ENCODE measurements at regions of chr2 and their contacts with region 1.

Region 1: DNA sequence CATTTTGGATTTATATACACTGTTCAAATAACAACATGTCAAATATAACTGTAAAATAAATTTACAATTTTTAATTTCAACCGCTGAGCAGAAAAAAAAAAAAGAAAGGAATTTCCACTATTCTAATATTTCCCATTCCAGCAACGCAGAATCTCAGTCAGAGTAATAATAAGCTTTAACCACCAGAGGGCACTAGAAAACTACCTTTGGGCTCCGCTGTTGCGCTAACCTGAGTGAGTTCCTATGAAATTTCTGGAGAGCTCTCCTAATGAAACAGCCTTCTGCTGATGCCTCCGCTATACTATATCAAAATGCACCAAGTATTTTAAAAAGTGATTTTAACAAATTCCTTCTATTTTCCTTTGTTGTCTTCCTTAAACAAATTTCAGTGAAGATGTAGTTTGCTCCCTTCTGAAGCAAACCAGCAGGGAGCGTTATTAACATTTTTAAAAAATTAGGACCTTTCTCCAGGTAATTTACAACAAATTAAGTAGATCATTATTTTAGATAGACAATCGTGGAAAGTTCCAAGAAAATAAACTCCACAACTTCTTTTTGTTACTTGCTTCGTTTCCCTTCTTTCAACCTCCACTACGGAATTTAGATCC is 23.0 kb downstream of the ERMN start:
- DNase-seq: peak; percentile 50
- ATAC-seq: peak; percentile 75
- H3K4me3 Mint-ChIP-seq: no peak overlapping the region
- H3K27ac Mint-ChIP-seq: no peak overlapping the region
- H3K4me1 Mint-ChIP-seq: peaks cover 30% of the 10 kb centered on the region
- H3K27me3 Mint-ChIP-seq: peaks cover 3% of the 10 kb centered on the region

Region 2: DNA sequence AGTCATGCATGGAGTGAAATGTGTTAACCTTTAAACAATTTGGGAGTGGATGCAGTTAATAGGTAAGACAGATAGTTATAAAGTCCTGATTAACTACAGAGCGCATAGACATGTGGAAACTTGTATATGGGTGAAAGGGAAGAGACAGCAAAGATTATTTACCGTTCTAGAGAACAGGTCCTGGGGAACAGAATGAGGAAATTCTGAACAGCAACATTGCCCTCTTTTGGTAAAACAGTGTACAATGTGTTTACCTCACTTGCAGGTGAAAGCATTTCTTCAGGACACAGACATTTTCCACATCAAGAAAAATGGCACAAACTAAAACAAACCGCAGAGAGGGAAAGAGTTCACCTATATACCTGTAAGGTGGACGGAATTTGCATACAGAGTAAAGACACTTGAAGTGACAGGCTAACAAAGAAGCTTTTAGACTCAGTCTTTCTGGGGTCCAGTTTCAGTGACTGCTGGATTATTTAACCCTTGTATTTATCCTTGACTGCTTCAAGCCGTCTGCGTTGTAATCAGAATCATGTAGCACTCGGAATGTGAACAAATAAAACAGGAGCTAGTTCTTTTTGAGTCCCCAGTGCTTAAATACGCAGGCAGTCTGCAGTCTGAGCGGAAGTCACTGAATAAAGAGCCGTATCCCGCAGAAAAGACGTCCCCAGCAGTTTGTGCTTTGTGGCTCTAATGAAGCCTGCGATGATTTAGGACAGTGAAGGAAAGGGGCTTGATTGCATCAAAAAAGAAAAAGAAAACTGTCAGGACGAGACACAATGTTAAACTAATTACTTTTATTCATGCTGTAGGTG is 409.9 kb before region 1 on chr2:
- CTCF ChIA-PET with region 1: no interaction called
- POLR2A ChIA-PET with region 1: no interaction called
- intact Hi-C with region 1: no loop called
- DNase-seq: no peak
- ATAC-seq: peak; percentile 58
- H3K4me3 Mint-ChIP-seq: no peak overlapping the region
- H3K27ac Mint-ChIP-seq: no peak overlapping the region
- H3K4me1 Mint-ChIP-seq: peaks cover 10% of the 10 kb centered on the region
- H3K27me3 Mint-ChIP-seq: peaks cover 30% of the 10 kb centered on the region

Region 3: GRCh38 chr2:156908825-156909224 is 393.8 kb before region 1 on chr2:
- CTCF ChIA-PET with region 1: no interaction called
- POLR2A ChIA-PET with region 1: no interaction called
- intact Hi-C with region 1: no loop called
- DNase-seq: no peak
- ATAC-seq: peak; percentile 30
- H3K4me3 Mint-ChIP-seq: no peak overlapping the region
- H3K27ac Mint-ChIP-seq: no peak overlapping the region
- H3K4me1 Mint-ChIP-seq: peaks cover 3% of the 10 kb centered on the region
- H3K27me3 Mint-ChIP-seq: no peaks in the 10 kb centered on the region

Region 4: DNA sequence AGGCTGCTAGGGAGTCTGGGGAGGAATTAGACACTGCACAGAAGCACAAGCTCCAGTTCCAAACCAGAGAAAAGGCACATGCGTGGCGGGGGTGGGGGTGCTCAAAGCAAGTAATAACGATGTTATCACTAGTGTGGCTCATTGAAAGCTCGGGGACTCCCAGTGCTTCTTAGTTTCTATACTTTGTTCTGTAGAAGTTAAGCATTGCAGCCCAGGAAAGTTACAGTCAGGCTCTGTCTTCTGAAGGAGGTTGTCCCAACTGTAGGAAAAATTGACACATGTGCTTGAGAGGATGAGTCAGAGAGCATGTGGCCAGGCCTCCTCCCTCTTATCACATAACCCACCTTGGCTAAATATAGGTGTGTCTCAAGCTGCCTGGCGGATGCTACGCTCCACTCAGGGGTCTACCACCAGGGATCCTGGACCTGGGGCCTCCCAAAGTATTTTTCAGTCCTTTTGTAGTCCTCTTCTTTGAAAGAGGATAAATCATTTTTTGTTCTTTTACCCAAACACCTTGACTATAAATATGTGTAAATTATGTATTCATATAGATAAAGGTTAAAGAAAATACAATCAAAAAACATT is 41.3 kb before region 1 on chr2:
- CTCF ChIA-PET with region 1: interaction called, 15 read pairs
- POLR2A ChIA-PET with region 1: no interaction called
- intact Hi-C with region 1: loop called in 1 of 2 experiments (anchors 2 kb)
- DNase-seq: peak; percentile 84
- ATAC-seq: peak; percentile 79
- H3K4me3 Mint-ChIP-seq: peak overlapping the region; percentile 4
- H3K27ac Mint-ChIP-seq: peak overlapping the region; percentile 26
- H3K4me1 Mint-ChIP-seq: peaks cover 38% of the 10 kb centered on the region
- H3K27me3 Mint-ChIP-seq: peaks cover 12% of the 10 kb centered on the region

Region 5: GRCh38 chr2:157320409-157320808 is 17.8 kb after region 1 on chr2:
- CTCF ChIA-PET with region 1: interaction called, 189 read pairs
- POLR2A ChIA-PET with region 1: no interaction called
- intact Hi-C with region 1: no loop called
- DNase-seq: no peak
- ATAC-seq: no peak
- H3K4me3 Mint-ChIP-seq: no peak overlapping the region
- H3K27ac Mint-ChIP-seq: no peak overlapping the region
- H3K4me1 Mint-ChIP-seq: peaks cover 21% of the 10 kb centered on the region
- H3K27me3 Mint-ChIP-seq: no peaks in the 10 kb centered on the region

Region 6: DNA sequence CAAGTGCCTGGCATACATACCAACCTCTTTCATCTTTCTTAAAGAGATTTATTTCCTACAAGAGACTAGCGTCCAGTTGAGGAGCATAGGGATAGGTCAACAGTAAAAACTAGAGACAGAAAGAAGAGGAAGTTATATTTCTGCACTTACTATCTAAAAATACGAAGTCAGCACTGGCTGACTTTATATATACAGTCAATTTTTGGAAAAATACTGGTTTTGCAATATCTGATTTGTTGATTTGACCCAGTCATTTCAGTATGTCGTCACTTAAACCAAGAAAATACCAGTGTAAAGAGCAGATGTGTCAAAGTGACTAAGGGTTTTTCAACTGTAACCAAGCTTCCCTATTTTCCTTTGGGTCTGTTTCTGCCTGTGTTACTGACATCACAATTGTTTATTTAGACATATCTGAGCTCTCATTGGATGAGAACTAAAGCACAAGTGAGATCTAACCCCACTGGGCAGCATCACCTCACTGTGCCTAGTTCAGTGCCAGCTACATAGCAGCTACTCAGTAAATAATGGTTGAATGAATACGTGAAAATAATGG is 118.3 kb after region 1 on chr2:
- CTCF ChIA-PET with region 1: interaction called, 14 read pairs
- POLR2A ChIA-PET with region 1: interaction called, 3 read pairs
- intact Hi-C with region 1: no loop called
- DNase-seq: peak; percentile 60
- ATAC-seq: peak; percentile 57
- H3K4me3 Mint-ChIP-seq: peak overlapping the region; percentile 52
- H3K27ac Mint-ChIP-seq: peak overlapping the region; percentile 93
- H3K4me1 Mint-ChIP-seq: peaks cover 78% of the 10 kb centered on the region
- H3K27me3 Mint-ChIP-seq: no peaks in the 10 kb centered on the region

Region 7: DNA sequence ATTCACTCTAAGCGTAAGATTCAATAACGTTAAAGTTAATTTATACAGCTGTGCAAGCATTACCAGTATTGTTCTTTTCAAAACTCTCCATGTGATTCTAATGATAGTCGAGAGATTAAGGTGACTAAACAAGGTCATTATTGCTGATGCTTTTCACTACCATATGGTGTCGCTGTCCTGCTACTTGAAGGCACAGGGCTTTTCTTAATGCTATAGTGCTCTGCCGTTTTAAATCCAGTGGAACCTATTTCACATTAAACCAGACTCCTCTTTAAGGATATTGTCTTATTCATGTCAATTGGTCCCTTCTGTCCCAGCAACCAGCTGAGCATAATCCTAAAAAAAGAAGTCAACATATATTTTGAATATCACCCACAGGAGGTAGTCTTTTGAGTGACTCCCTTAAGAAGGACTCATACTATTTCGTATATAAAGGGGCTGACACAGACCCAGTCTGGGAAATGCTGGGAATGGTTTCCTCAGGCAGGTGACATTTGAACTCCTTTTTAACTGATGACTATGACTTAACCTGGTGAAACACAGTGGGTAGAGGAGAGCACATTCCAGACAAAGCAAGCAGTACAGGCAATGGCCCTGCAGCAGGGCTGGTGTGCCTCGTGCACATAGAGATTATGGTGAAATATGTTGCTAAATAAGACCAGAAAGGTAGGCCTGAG is 195.2 kb after region 1 on chr2:
- CTCF ChIA-PET with region 1: interaction called, 44 read pairs
- POLR2A ChIA-PET with region 1: no interaction called
- intact Hi-C with region 1: loop called (anchors 2 to 10 kb)
- DNase-seq: peak; percentile 23
- ATAC-seq: peak; percentile 94
- H3K4me3 Mint-ChIP-seq: no peak overlapping the region
- H3K27ac Mint-ChIP-seq: no peak overlapping the region
- H3K4me1 Mint-ChIP-seq: peaks cover 43% of the 10 kb centered on the region
- H3K27me3 Mint-ChIP-seq: no peaks in the 10 kb centered on the region

Region 8: DNA sequence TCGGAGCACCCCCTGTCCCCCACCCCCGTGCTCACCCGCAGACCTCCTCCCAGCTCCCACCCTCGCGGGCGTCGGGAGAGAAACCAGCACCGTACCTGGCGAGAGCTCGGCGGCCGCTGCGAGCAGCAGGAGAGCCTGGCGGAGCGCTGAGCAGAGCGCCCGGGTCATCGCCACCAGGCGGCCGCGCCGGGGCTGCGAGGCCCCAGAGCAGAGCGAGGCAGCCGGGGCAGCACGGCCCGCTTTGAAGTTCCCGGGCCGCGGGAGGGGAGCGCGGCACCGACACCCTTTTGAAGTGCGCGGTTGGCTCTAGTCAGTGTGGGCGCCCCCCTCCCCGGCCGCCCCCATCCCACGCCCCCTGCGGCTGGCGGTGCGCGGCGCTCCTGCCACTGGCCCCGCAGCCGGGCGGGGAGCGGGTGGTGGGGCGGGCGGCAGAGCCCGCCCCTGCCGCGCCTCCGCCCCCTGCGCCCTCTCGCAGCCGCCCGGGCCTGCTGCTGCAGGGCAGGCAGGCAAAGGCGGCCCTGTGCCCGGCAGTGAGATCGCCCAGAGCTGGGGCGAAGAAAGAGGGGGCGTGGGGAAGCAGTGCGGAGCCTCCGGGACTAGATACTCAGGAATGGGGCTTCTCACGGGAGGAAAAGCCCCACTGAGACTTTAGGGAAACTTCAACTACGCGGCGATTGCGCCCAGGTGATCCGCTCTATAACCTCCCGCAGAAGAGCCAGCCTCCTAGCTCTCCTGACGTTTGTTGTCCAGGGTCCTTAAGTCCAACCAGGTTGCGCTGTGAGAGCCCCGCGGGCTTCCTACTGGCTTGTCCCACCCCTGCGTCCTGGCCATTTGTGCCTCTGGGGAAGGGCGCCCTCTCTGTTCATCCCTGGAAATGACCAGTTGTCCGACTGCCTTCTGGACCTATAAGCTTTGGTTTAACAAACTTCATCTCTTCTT is 326.1 kb after region 1 on chr2 and contains the start of gene ACVR1C:
- CTCF ChIA-PET with region 1: interaction called, 17 read pairs
- POLR2A ChIA-PET with region 1: no interaction called
- intact Hi-C with region 1: loop called (anchors 1 to 10 kb)
- DNase-seq: peak; percentile 80
- ATAC-seq: peak; percentile 82
- H3K4me3 Mint-ChIP-seq: peak within 1 kb of the TSS; percentile 76
- H3K27ac Mint-ChIP-seq: peak within 1 kb of the TSS; percentile 23
- H3K4me1 Mint-ChIP-seq: peaks cover 34% of the 10 kb centered on the region
- H3K27me3 Mint-ChIP-seq: peaks cover 5% of the 10 kb centered on the region
- total RNA-seq, gene ACVR1C: 1.6 to 1.7 TPM

Region 9: DNA sequence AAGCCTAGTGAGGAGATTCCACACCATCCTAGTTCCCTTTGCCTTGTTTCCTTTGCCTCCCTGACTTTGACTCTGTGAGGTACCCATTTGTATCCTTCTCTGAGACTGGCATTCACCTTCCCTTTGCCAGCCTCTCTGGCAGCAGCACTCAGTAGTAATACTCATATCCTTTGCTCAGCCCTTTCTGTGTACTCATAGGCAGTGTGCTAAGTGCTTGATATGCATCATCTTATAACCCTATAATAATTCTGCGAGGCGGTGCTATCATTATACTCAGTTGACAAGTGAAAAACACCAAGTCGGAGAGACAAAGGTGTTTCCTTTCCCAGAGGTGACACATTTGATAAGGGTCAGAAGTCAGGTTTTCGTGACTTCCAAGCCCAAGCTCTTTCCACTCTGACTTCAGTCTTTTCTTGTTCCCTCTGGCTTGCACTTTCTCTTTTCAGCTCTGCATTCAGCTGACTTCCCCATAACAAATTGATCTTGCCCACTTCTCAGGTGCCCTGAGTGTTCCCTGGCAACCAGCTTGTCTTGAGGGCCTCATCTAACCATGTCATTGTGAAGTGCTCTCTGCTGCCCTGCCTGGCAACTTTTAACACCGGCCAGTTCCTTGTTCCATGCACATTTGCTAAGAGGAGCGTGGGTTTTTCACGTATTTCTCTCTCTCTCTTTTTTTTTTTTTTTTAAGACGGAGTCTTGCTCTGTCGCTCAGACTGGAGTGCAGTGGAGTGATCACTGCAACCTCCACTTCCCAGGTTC is 704.5 kb after region 1 on chr2:
- CTCF ChIA-PET with region 1: interaction called, 12 read pairs
- POLR2A ChIA-PET with region 1: no interaction called
- intact Hi-C with region 1: loop called (anchors 1 kb)
- DNase-seq: peak; percentile 44
- ATAC-seq: peak; percentile 82
- H3K4me3 Mint-ChIP-seq: no peak overlapping the region
- H3K27ac Mint-ChIP-seq: no peak overlapping the region
- H3K4me1 Mint-ChIP-seq: peaks cover 18% of the 10 kb centered on the region
- H3K27me3 Mint-ChIP-seq: peaks cover 6% of the 10 kb centered on the region

Measured in activated CD4-positive, alpha-beta T cell treated with anti-CD3 and anti-CD28 coated beads for 36 hours (primary cell).